BJ (cell line): ENCODE measurements at regions of chr4 and their contacts with region 1.

Region 1: DNA sequence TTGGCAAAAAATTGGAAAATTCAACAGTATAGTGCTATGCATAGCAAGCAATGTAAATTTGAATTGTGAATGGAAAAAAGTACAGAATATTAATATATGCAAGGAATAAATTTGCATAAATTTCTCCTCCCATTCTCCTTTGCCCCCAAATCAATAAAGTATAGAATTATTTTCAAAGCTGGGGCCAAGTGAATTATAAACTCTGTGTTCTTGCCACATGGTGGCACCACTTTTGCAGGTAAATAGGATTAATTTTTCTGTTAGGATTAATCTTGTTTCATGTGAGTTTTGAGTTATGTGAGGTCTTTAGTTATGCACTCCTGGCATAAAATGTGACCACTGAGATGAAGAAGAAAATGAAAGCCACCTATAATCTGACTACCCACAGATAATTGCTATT is 19.9 kb downstream of the COPS4 start:
- DNase-seq: no peak
- H3K4me3 ChIP-seq: no peak overlapping the region
- H3K27me3 ChIP-seq: no peaks in the 10 kb centered on the region
- CTCF ChIP-seq: peak; percentile 40

Region 2: GRCh38 chr4:83259586-83259985 is 204.7 kb after region 1 on chr4:
- CTCF ChIA-PET with region 1: interaction called, 13 read pairs
- POLR2A ChIA-PET with region 1: interaction called, 7 read pairs
- DNase-seq: no peak
- H3K4me3 ChIP-seq: no peak overlapping the region
- H3K27me3 ChIP-seq: no peaks in the 10 kb centered on the region
- CTCF ChIP-seq: no peak